A673 (cell line): ENCODE measurements at regions of chr7 and their contacts with region 1.

Region 1: DNA sequence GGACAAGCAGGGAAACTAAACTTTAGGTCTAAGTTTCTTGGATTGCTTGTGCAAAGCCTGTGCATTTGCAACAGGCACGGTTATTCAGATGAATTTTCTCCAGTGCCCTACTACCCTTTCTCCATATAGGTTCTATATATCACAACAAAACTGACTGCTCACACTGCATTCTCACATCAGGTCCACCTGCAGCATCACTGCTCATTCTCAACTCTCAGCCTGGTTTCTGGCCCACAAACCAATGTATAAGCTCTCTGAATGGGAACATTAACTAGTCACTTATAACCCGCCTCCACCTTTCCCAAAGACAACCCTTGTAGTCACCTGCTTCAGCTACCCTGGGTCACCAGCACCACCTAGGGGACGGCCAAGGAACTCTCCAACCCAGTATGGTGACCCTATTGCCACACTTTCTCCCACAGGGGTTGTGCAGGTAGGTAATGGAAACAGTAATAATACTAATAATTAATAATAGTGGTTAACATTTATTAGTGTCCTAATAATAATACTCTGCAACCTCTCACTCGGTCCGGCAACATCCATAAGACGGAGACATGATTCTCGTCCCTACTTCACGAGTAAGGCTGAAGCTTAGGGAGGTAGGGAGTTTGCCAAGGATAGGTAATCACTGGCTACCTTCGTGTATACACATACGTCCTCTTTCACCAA is 97.3 kb downstream of the CLEC2L start:
- DNase-seq: peak; percentile 38
- H3K4me3 ChIP-seq: no peak overlapping the region
- H3K27ac ChIP-seq: no peak overlapping the region
- H3K4me1 ChIP-seq: peaks cover 7% of the 10 kb centered on the region
- H3K27me3 ChIP-seq: no peaks in the 10 kb centered on the region
- CTCF ChIP-seq: peak; percentile 78

Region 2: DNA sequence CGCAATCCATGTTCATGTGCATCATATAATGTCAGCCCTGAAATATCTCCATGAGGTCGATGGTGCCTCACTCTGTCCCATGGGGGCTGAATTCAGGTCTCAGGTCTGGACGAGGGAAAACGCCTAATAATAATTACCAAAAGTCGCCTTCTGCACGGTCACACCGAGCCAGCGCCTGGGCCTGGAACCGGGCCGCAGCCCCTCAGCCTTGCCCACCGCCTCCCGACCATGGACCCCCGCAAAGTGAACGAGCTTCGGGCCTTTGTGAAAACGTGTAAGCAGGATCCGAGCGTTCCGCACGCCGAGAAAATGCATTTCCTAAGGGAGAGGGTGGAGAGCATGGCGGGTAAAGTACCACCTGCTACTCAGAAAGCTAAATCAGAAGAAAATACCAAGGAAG is 118.6 kb before region 1 on chr7:
- CTCF ChIA-PET with region 1: no interaction called
- POLR2A ChIA-PET with region 1: no interaction called
- intact Hi-C with region 1: loop called (anchors 5 kb)
- DNase-seq: no peak
- H3K4me3 ChIP-seq: no peak overlapping the region
- H3K27ac ChIP-seq: no peak overlapping the region
- H3K4me1 ChIP-seq: no peaks in the 10 kb centered on the region
- H3K27me3 ChIP-seq: no peaks in the 10 kb centered on the region
- CTCF ChIP-seq: no peak

Region 3: GRCh38 chr7:139635526-139636302 is 14.9 kb after region 1 on chr7:
- CTCF ChIA-PET with region 1: no interaction called
- POLR2A ChIA-PET with region 1: no interaction called
- intact Hi-C with region 1: no loop called
- DNase-seq: no peak
- H3K4me3 ChIP-seq: no peak overlapping the region
- H3K27ac ChIP-seq: no peak overlapping the region
- H3K4me1 ChIP-seq: no peaks in the 10 kb centered on the region
- H3K27me3 ChIP-seq: no peaks in the 10 kb centered on the region
- CTCF ChIP-seq: no peak

Region 4: DNA sequence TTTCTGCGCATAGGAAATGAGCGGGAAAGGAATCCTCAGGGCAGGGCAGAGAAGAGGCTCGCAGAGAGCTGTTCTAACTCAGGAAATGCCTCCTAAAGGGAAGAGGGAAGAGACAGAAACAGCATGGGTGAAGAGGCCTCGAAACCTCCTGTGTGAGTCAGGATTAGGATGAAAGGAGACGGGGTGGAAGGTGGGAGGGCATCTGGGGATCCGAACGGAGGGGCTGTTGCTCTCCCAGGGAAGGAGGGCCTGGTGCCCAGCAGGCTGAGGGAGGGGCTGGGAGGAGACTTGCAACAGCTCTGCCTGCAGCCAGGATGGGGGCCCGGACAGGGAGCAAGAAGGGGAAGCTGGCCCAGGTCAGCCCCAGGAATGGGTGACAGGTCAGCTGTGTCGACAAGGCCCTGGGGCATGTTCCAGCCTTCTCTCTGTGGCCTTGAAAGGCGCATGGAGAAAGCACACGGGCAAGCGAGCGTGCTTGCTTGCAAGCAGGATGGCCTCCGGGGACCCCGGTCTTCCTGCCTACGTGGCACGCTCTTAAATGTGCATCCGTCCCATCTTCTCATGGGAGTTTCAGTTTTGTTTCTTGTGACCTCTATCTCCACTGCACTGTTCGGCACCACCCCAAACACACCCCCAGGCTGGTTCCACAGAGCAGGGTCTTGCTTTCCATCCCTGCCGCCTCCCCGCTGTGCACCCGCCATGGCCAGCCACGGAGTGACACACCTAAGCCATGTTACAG is 93.5 kb after region 1 on chr7:
- CTCF ChIA-PET with region 1: no interaction called
- POLR2A ChIA-PET with region 1: no interaction called
- intact Hi-C with region 1: no loop called
- DNase-seq: no peak
- H3K4me3 ChIP-seq: no peak overlapping the region
- H3K27ac ChIP-seq: no peak overlapping the region
- H3K4me1 ChIP-seq: no peaks in the 10 kb centered on the region
- H3K27me3 ChIP-seq: no peaks in the 10 kb centered on the region
- CTCF ChIP-seq: no peak